Endothelial cell of umbilical vein (primary cell): ENCODE measurements at regions of chr1 and their contacts with region 1.

Region 1: GRCh38 chr1:207603777-207604176 is 41.2 kb upstream of the CR1L start:
- DNase-seq: peak; percentile 5
- H3K4me3 ChIP-seq: no peak overlapping the region
- H3K27ac ChIP-seq: no peak overlapping the region
- H3K4me1 ChIP-seq: no peaks in the 10 kb centered on the region
- H3K27me3 ChIP-seq: peaks cover 5 to 22% of the 10 kb centered on the region in 2 experiments
- CTCF ChIP-seq: no peak
- POLR2A ChIP-seq: no peak

Region 2: DNA sequence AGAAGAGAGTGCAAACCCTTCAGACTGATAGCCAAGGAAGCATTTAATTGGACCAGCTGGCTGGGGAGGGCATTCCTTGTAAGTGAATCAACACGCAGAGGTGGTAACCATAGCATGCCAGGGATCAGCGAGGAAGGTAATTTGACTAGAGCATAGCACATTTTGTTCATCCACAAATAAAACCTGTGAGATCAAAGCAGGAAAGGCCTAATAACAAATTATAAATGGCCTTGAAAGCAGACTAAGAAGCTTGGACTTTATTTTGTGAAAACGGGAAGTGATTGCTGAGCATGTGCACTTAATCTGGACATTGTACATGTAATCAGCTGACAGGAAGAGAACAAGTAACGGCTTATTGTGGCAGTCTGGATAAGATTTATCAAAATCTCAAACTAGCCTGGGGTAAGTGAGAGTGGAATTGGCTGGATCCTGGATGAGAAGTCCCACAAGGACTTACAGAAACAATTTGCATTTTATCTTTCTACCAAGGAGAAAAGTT is 294.0 kb before region 1 on chr1:
- CTCF ChIA-PET with region 1: no interaction called
- POLR2A ChIA-PET with region 1: no interaction called
- dilution Hi-C with region 1: no loop called
- intact Hi-C with region 1: no loop called
- DNase-seq: peak; percentile 89
- H3K4me3 ChIP-seq: peak overlapping the region in 1 of 3 experiments; percentile 23
- H3K27ac ChIP-seq: peak overlapping the region; percentile 69
- H3K4me1 ChIP-seq: peaks cover 37% of the 10 kb centered on the region
- H3K27me3 ChIP-seq: no peaks in the 10 kb centered on the region
- CTCF ChIP-seq: no peak
- POLR2A ChIP-seq: no peak

Region 3: DNA sequence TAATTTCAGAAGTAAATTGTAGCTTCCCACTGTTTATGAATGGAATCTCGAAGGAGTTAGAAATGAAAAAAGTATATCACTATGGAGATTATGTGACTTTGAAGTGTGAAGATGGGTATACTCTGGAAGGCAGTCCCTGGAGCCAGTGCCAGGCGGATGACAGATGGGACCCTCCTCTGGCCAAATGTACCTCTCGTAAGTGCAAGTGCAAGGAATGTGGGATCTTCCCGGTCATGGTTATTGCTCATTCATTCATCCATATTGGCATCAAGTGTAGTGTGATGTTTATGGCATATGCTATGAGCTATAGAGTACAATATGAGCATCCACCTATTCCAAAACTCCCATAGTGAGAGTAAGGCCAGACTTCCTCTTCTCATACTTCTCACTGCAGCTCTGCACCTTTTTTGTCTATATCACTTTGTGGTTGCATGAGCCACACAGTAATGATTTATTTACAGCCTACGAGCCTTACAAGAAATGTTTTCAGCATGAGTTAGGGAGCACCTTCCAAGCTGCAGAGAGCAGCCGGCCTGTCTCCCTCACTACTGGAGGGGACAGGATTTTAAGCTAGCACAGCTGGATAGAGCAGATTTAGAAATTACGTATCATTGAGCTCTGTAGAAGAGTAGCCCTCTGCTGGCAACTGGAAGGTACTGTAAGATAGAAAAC is 16.2 kb after region 1 on chr1:
- CTCF ChIA-PET with region 1: interaction called, 19 read pairs
- POLR2A ChIA-PET with region 1: no interaction called
- dilution Hi-C with region 1: no loop called
- intact Hi-C with region 1: no loop called
- DNase-seq: peak; percentile 50
- H3K4me3 ChIP-seq: no peak overlapping the region
- H3K27ac ChIP-seq: no peak overlapping the region
- H3K4me1 ChIP-seq: no peaks in the 10 kb centered on the region
- H3K27me3 ChIP-seq: peaks cover 2 to 6% of the 10 kb centered on the region in 2 experiments
- CTCF ChIP-seq: peak; percentile 49 to 77
- POLR2A ChIP-seq: no peak